ENCODE measurements at regions of chrX and their contacts with region 1.

Region 1: DNA sequence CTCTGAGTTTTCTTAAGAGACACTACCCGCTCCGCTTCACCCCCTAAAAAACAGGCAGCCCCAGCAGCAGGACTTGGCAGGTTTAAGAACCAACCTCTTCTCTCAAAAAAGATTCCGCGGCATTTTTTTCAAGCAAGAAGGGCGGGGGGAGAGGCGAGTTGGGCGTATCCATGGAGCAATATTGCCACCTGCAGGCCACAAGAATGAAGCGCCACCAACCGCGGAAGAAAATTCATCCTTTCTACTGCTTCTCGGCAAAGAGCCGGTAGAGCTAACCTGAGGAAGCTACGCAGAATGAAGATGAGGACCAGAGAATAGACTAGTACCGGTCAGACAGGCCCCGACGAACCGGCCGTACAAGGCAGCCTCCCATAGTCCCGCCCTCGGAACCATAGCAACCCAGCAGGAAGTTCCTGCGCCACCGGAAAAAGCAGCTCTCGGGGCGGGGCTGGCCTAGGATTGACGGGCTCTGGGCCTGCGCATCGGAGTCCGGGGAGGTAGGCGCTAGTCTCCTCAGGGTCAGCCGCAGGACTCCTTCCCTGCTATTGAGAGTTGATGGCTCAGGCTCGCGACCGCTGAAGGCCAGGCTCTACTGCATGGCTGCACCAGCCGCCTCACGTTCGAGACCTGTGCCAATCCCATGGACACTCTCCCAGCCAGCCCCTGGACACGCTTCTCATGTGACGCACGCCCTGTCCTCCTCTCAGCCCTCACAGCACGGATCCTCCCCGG is 76.9 kb downstream of the MAGED4 start:
- DNase-seq: peak; percentile 83 to 87
- ATAC-seq: peak; percentile 98 to 99
- H3K4me3 ChIP-seq: peak overlapping the region; percentile 59 to 71 (median 66)
- H3K27ac ChIP-seq: peak overlapping the region; percentile 77 to 86 (median 86)
- H3K4me1 ChIP-seq: peaks cover 0 to 7% of the 10 kb centered on the region in 2 donors
- H3K27me3 ChIP-seq: peaks cover 0 to 7% (median 0%) of the 10 kb centered on the region in 3 donors
- CTCF ChIP-seq: peak; percentile 85 to 100 (median 97)
- POLR2A ChIP-seq: peak; percentile 27 to 32

Region 2: GRCh38 chrX:51487960-51488267 is 773.7 kb before region 1 on chrX:
- in situ Hi-C with region 1: no loop called
- intact Hi-C with region 1: no loop called
- DNase-seq: no peak
- ATAC-seq: no peak
- H3K4me3 ChIP-seq: no peak overlapping the region
- H3K27ac ChIP-seq: no peak overlapping the region
- H3K4me1 ChIP-seq: no peaks in the 10 kb centered on the region
- H3K27me3 ChIP-seq: peaks cover 0 to 15% (median 7%) of the 10 kb centered on the region in 3 donors
- CTCF ChIP-seq: no peak
- POLR2A ChIP-seq: no peak

Region 3: DNA sequence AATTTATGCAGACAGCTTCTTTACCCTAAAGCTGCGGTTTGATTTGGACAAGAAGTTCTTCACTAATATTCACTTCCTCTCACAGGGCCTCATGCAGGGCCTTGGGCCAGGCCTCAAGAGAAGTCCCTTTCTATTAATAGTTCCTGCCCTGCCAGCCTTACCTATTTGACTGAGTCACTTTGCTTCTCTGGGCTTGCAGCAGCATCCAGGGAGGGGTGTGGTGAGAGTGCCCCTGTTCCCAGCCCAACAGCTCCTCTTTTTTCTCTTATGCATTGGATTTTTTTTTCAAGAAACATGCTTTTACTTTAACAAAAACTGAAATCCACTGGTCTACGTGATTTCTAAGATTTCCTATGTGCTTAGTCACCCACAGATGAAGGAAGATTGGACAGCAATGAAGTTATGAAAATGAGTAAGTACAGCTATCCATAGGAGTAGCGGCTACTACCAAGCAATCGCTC is 662.2 kb after region 1 on chrX:
- in situ Hi-C with region 1: loop called in 1 of 4 experiments (anchors 25 kb)
- intact Hi-C with region 1: no loop called
- DNase-seq: peak; percentile 21 to 60
- ATAC-seq: peak; percentile 62 to 66
- H3K4me3 ChIP-seq: no peak overlapping the region
- H3K27ac ChIP-seq: peak overlapping the region; percentile 54 to 94 (median 68)
- H3K4me1 ChIP-seq: peaks cover 8 to 13% of the 10 kb centered on the region in 2 donors
- H3K27me3 ChIP-seq: no peaks in the 10 kb centered on the region
- CTCF ChIP-seq: no peak
- POLR2A ChIP-seq: no peak